B cell (primary cell): ENCODE measurements at regions of chr6 and their contacts with region 1.

Region 1: GRCh38 chr6:134161036-134161435 is 108.6 kb upstream of the SLC2A12 start:
- DNase-seq: no peak
- ATAC-seq: no peak
- H3K4me3 ChIP-seq: no peak overlapping the region
- H3K4me3 Mint-ChIP-seq: no peak overlapping the region
- H3K27ac ChIP-seq: no peak overlapping the region
- H3K27ac Mint-ChIP-seq: no peak overlapping the region
- H3K4me1 ChIP-seq: no peaks in the 10 kb centered on the region
- H3K4me1 Mint-ChIP-seq: no peaks in the 10 kb centered on the region
- H3K27me3 ChIP-seq: no peaks in the 10 kb centered on the region
- H3K27me3 Mint-ChIP-seq: no peaks in the 10 kb centered on the region
- CTCF ChIP-seq: no peak

Region 2: DNA sequence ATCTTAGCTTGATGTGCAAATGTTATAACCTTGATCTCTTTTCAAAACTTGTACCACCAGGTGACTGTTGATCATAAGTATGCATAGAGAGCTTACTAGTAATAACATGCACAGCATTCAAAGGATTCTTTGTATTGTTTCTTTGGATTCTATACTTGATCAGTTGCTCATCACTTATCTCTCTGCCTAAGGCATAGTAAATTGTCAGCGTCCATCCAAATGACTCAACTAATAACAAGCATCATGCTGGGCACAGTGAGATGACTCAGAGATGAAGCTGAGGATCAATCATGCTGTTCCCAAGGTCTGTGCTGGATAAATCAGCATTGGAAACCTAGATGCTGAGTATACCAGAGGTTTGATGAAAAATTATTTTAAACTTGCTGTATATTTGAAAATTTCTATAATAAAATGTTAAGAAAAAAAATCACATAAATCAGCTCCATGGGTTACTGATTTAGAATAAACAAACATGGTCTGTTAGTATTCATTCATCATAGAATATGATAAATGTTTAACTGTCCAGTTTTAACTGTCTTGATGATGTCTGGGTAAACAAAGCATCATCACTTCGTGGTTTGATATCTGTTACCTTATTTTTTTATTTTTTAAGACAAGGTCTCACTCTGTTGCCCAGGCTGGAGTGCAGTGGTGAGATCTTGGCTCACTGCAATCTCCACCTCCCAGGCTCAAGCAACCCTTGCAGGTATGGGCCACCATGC is 202.4 kb after region 1 on chr6:
- CTCF ChIA-PET with region 1: no interaction called
- POLR2A ChIA-PET with region 1: no interaction called
- intact Hi-C with region 1: no loop called
- DNase-seq: no peak
- ATAC-seq: no peak
- H3K4me3 ChIP-seq: no peak overlapping the region
- H3K4me3 Mint-ChIP-seq: no peak overlapping the region
- H3K27ac ChIP-seq: no peak overlapping the region
- H3K27ac Mint-ChIP-seq: no peak overlapping the region
- H3K4me1 ChIP-seq: no peaks in the 10 kb centered on the region
- H3K4me1 Mint-ChIP-seq: no peaks in the 10 kb centered on the region
- H3K27me3 ChIP-seq: no peaks in the 10 kb centered on the region
- H3K27me3 Mint-ChIP-seq: no peaks in the 10 kb centered on the region
- CTCF ChIP-seq: no peak

Region 3: DNA sequence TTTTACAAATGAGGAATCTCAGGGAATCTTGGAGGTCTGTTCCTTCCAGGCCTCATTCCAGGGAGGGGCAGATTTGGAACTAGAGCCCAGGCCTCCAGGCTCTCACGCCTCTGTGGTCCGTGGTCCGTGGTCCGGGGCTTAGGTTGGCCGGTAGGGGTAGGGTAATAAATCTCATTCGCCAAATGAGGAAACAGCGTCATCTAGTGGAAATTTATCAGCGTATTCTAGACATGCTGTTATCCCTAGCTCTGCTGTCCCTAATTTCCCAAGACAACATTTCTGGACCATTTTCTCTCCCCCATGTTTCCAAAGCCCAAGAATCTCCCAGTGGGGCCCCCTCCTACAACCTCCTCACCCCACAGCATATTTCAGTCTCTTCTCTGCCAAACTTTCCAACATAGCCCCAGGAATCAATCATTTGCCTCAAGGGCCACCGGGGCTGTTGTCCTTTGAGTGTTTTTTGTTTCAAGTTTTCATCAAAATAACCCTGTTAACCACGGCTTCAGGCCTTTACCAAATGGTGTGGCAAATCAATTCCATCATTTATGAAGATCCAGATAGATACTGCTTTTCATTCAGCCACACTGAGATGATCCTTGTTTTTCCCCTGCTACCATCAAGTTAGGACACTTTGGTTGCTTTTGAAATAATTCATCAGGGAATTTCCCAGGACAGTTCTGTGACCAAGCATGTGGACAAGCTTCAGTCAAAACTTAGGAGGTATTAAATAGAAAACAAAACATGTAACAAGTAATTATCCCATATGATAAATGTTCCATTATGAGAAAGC is 662.1 kb after region 1 on chr6:
- CTCF ChIA-PET with region 1: interaction called, 47 read pairs
- POLR2A ChIA-PET with region 1: no interaction called
- intact Hi-C with region 1: loop called (anchors 1 kb)
- DNase-seq: peak; percentile 72
- ATAC-seq: peak; percentile 74
- H3K4me3 ChIP-seq: no peak overlapping the region
- H3K4me3 Mint-ChIP-seq: no peak overlapping the region
- H3K27ac ChIP-seq: no peak overlapping the region
- H3K27ac Mint-ChIP-seq: no peak overlapping the region
- H3K4me1 ChIP-seq: no peaks in the 10 kb centered on the region
- H3K4me1 Mint-ChIP-seq: peaks cover 9% of the 10 kb centered on the region
- H3K27me3 ChIP-seq: no peaks in the 10 kb centered on the region
- H3K27me3 Mint-ChIP-seq: peaks cover 3% of the 10 kb centered on the region
- CTCF ChIP-seq: peak; percentile 77

Region 4: DNA sequence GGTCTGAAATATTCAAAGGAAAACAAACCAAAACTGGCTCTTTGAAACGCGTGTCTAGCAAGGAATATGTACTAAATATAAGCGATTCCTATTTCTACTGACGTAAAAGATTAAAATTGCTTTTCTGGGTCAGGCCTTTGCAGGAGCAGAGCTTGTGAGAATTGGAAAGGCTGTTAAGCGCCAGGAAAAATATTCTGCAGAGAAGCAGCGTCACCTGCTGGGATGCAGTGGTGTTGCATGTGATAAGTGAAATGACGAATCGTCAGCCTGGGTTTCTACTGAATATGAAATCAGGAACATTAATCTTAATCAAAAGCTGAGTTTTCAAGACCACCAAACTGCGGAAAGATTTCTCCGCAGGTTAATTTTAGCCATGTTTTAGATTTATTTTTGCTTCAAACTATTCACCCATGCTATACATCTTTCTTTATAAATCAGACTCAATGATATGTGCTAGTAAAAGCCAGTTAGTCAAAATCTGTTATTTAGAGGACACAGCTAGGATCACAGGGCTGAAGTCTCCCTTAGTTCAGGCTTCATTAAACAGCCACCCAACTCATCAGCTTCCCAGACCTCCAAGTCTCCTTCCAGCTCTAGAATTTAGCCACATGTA is 721.5 kb after region 1 on chr6:
- CTCF ChIA-PET with region 1: interaction called, 39 read pairs
- POLR2A ChIA-PET with region 1: interaction called, 6 read pairs
- intact Hi-C with region 1: loop called (anchors 1 kb)
- DNase-seq: peak; percentile 65
- ATAC-seq: peak; percentile 54
- H3K4me3 ChIP-seq: no peak overlapping the region
- H3K4me3 Mint-ChIP-seq: no peak overlapping the region
- H3K27ac ChIP-seq: no peak overlapping the region
- H3K27ac Mint-ChIP-seq: no peak overlapping the region
- H3K4me1 ChIP-seq: peaks cover 0 to 3% of the 10 kb centered on the region in 2 donors
- H3K4me1 Mint-ChIP-seq: no peaks in the 10 kb centered on the region
- H3K27me3 ChIP-seq: peaks cover 0 to 5% (median 2%) of the 10 kb centered on the region in 4 experiments
- H3K27me3 Mint-ChIP-seq: peaks cover 21% of the 10 kb centered on the region
- CTCF ChIP-seq: peak; percentile 87

Region 5: DNA sequence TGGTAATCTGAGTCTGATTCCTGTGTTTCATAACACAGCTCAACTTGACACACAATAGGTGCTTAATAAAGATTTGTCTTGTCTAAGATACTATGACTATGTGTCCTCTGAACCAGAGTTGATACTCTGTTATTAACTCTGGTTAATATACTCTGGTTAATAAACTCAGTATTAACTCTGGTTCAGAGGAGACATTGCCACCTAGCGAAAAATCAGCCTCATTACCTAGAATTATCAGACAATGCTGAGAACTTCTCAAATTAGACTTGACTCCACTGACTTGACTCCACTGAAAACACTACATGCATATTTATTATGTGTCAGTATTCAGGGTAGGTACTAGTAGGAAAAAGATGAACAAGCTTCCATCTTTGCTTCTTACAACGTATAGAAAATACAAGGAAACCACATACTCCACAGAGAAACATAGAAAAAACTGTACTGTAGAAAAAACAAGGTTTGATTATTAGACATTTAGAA is 1262.7 kb after region 1 on chr6:
- CTCF ChIA-PET with region 1: interaction called, 3 read pairs
- POLR2A ChIA-PET with region 1: no interaction called
- intact Hi-C with region 1: loop called (anchors 1 kb)
- DNase-seq: peak; percentile 55
- ATAC-seq: peak; percentile 62
- H3K4me3 ChIP-seq: no peak overlapping the region
- H3K4me3 Mint-ChIP-seq: no peak overlapping the region
- H3K27ac ChIP-seq: no peak overlapping the region
- H3K27ac Mint-ChIP-seq: no peak overlapping the region
- H3K4me1 ChIP-seq: no peaks in the 10 kb centered on the region
- H3K4me1 Mint-ChIP-seq: no peaks in the 10 kb centered on the region
- H3K27me3 ChIP-seq: no peaks in the 10 kb centered on the region
- H3K27me3 Mint-ChIP-seq: no peaks in the 10 kb centered on the region
- CTCF ChIP-seq: peak; percentile 81